Natural killer cell (primary cell): ENCODE measurements at regions of chr5 and their contacts with region 1.

Region 1: GRCh38 chr5:128083033-128083810 is at the start of gene SLC12A2:
- DNase-seq: peak; percentile 91 to 98
- ATAC-seq: peak; percentile 70 to 85 (median 73)
- H3K4me3 ChIP-seq: peak within 1 kb of the TSS; percentile 74
- H3K4me3 Mint-ChIP-seq: peak within 1 kb of the TSS; percentile 89
- H3K27ac ChIP-seq: peak within 1 kb of the TSS; percentile 91
- H3K27ac Mint-ChIP-seq: peak within 1 kb of the TSS; percentile 91 to 93
- H3K4me1 ChIP-seq: peaks cover 17% of the 10 kb centered on the region
- H3K4me1 Mint-ChIP-seq: peaks cover 49% of the 10 kb centered on the region in 2 donors
- H3K27me3 ChIP-seq: no peaks in the 10 kb centered on the region
- H3K27me3 Mint-ChIP-seq: no peaks in the 10 kb centered on the region
- CTCF ChIP-seq: no peak
- total RNA-seq, gene SLC12A2: 14.3 to 18.1 (median 17.4) TPM

Region 2: DNA sequence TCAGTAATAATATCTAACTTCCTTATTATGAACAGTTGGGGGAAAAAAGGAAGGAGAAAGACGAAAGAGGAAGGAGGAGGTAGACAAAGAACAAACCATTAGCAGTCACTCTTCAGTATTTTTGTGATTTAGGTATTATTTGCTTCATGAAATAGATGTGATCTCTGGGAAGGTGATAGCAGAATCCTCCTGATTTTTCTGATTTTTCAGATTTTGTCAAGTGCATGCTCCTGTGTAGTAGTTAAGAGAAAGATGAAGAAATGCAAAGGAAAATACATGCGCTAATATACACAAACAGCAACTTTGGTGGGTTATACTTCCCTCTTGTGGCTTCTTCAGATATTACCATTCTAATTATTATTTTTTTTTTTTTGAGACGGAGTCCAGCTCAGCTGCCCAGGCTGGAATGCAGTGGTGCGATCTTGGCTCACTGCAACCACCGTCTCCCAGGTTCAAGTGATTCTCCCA is 1274.7 kb before region 1 on chr5:
- intact Hi-C with region 1: loop called (anchors 10 kb)
- DNase-seq: peak in 1 of 2 donors; percentile 53
- ATAC-seq: no peak
- H3K4me3 ChIP-seq: no peak overlapping the region
- H3K4me3 Mint-ChIP-seq: no peak overlapping the region
- H3K27ac ChIP-seq: peak overlapping the region; percentile 4
- H3K27ac Mint-ChIP-seq: peak overlapping the region; percentile 94 to 95
- H3K4me1 ChIP-seq: peaks cover 20% of the 10 kb centered on the region
- H3K4me1 Mint-ChIP-seq: peaks cover 27 to 31% of the 10 kb centered on the region in 2 donors
- H3K27me3 ChIP-seq: no peaks in the 10 kb centered on the region
- H3K27me3 Mint-ChIP-seq: no peaks in the 10 kb centered on the region
- CTCF ChIP-seq: peak; percentile 63

Region 3: DNA sequence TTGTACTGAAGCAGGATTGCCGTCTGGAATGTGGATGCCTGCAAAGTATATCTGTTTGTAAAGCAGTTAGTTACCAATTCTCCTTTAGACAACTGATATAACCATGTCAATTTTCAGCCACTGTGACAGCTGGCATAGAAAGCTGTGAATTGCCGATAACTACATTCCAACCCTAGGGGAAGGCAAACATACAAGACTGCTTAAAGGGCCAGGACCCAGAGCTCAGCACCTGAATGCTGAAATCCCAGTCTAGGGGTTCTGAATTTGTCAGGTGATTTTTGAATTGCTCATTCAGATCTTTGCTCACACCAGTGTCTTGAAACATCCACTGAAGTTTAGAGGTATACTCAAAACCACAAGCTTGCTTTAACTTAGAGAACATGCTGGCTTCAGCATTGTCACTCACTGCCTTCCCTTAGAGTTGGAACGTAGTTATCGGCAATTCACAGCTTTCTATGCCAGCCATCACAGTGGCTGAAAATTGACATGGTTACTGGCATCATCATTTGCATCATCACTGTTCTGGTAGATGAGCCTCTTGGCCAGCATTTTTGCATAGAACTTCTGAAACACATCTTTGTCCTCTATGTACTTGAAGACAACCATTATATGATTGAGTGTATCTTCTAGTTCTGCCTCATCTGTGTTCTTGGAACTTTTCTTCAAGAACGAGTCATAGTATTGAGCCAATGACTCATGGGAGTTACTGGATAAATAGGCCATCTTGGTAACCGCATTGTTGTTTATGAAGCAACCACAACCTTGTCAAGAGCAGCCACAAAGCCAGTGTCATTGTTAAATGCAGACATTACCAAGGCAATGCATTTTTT is 297.9 kb before region 1 on chr5:
- intact Hi-C with region 1: loop called (anchors 5 kb)
- DNase-seq: peak in 1 of 2 donors; percentile 60
- ATAC-seq: peak; percentile 71 to 82 (median 72)
- H3K4me3 ChIP-seq: no peak overlapping the region
- H3K4me3 Mint-ChIP-seq: peak overlapping the region; percentile 22
- H3K27ac ChIP-seq: peak overlapping the region; percentile 60
- H3K27ac Mint-ChIP-seq: peak overlapping the region; percentile 41 to 68
- H3K4me1 ChIP-seq: peaks cover 7% of the 10 kb centered on the region
- H3K4me1 Mint-ChIP-seq: peaks cover 11 to 15% of the 10 kb centered on the region in 2 donors
- H3K27me3 ChIP-seq: no peaks in the 10 kb centered on the region
- H3K27me3 Mint-ChIP-seq: peaks cover 0 to 3% of the 10 kb centered on the region in 2 donors
- CTCF ChIP-seq: no peak

Region 4: DNA sequence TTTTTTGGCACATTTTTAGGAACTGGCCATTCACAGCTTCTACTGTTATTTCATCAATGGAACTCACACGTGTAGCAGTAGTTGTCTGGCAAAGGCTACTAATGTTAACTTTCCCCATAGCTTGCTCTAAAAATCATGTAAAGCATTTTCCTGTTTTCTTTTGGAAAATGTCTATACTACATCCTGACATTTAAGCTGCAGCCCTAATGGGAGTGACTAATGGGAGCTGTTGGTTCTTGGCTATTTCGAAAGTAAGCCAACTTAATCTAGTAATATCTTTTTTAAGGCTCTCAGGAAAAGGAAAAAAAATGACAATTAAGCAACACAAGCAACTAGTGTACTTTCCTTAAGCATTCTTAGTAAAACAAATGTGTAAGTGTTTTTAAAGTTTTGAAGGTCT is 169.5 kb after region 1 on chr5:
- intact Hi-C with region 1: no loop called
- DNase-seq: no peak
- ATAC-seq: no peak
- H3K4me3 ChIP-seq: no peak overlapping the region
- H3K4me3 Mint-ChIP-seq: no peak overlapping the region
- H3K27ac ChIP-seq: no peak overlapping the region
- H3K27ac Mint-ChIP-seq: no peak overlapping the region
- H3K4me1 ChIP-seq: no peaks in the 10 kb centered on the region
- H3K4me1 Mint-ChIP-seq: no peaks in the 10 kb centered on the region
- H3K27me3 ChIP-seq: no peaks in the 10 kb centered on the region
- H3K27me3 Mint-ChIP-seq: no peaks in the 10 kb centered on the region
- CTCF ChIP-seq: no peak

Region 5: GRCh38 chr5:129094087-129094923 is 1011.1 kb after region 1 on chr5 and contains the start of gene ISOC1:
- intact Hi-C with region 1: loop called (anchors 10 kb)
- DNase-seq: peak; percentile 89 to 96
- ATAC-seq: peak; percentile 92 to 98 (median 93)
- H3K4me3 ChIP-seq: peak within 1 kb of the TSS; percentile 86
- H3K4me3 Mint-ChIP-seq: peak within 1 kb of the TSS; percentile 83
- H3K27ac ChIP-seq: peak within 1 kb of the TSS; percentile 79
- H3K27ac Mint-ChIP-seq: peak within 1 kb of the TSS; percentile 58 to 80
- H3K4me1 ChIP-seq: peaks cover 11% of the 10 kb centered on the region
- H3K4me1 Mint-ChIP-seq: peaks cover 22 to 25% of the 10 kb centered on the region in 2 donors
- H3K27me3 ChIP-seq: no peaks in the 10 kb centered on the region
- H3K27me3 Mint-ChIP-seq: peaks cover 12 to 17% of the 10 kb centered on the region in 2 donors
- CTCF ChIP-seq: no peak
- total RNA-seq, gene ISOC1: 11.3 to 15.5 (median 15.1) TPM